Mammary epithelial cell (primary cell): ENCODE measurements at regions of chr20 and their contacts with region 1.

Region 1: DNA sequence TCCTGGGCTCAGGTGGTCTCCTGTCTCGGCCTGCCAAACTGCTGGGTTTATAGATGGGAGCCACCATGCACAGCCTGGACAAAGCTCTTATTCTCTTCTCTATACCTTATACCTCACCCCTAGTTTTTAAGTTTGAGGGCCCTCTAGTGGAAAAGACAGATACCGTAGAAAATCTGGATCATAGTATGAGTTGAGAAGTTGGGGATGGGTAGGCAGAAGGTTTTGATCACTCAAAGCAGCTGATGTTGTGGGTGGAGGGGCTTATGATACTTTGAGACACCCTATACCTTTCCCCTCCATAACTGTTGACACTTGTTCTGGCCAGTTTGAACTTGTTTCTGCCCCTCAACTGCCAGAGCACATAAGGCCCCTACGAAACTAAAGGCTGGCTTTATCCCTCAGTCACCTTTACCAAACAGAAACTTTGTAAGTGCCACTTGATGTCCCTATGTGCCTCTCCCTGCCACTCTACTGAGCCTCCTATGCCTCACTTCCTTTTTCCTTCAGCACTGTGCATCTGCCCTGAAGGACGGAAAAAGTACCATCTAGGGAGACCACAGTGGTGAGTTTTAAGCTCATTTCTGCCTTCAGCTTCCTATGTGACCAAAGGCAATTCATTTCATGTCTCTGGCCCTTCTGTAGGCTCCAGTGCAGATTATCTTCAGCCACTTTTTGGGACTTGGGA is 28.6 kb downstream of the RALY start:
- DNase-seq: peak; percentile 15
- H3K4me3 ChIP-seq: no peak overlapping the region
- H3K27ac ChIP-seq: no peak overlapping the region
- H3K4me1 ChIP-seq: peaks cover 61% of the 10 kb centered on the region
- H3K27me3 ChIP-seq: no peaks in the 10 kb centered on the region
- CTCF ChIP-seq: peak; percentile 25 to 38

Region 2: GRCh38 chr20:33992923-33993575 is 29.2 kb before region 1 on chr20:
- CTCF ChIA-PET with region 1: interaction called, 3 read pairs
- dilution Hi-C with region 1: no loop called
- in situ Hi-C with region 1: no loop called
- intact Hi-C with region 1: loop called (anchors 1 kb)
- DNase-seq: peak; percentile 98
- H3K4me3 ChIP-seq: peak overlapping the region; percentile 68 to 93 (median 89)
- H3K27ac ChIP-seq: peak overlapping the region; percentile 86
- H3K4me1 ChIP-seq: peaks cover 15% of the 10 kb centered on the region
- H3K27me3 ChIP-seq: no peaks in the 10 kb centered on the region
- CTCF ChIP-seq: no peak